ENCODE measurements at regions of chr11 and their contacts with region 1.

Region 1: DNA sequence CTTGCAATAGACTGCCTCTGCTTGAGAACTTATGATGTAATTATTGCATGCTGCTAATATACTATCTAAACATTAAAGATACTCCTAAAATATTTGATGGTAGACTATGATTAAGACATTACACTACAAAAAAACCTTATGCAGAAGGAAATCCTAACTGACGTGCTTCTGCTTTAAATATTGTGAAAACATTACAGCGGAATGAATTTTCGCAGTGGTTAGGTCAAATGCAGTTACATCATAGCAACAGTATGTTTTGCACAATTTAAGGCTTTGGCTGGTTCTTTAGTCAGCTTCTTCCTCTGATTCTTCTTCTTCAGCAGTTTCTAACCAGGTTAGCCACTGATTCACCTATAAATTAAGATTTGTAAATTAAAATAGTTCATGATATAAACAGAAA is 11.2 kb downstream of the EIF4G2 start:
- DNase-seq: no peak
- CTCF ChIP-seq: no peak

Region 2: DNA sequence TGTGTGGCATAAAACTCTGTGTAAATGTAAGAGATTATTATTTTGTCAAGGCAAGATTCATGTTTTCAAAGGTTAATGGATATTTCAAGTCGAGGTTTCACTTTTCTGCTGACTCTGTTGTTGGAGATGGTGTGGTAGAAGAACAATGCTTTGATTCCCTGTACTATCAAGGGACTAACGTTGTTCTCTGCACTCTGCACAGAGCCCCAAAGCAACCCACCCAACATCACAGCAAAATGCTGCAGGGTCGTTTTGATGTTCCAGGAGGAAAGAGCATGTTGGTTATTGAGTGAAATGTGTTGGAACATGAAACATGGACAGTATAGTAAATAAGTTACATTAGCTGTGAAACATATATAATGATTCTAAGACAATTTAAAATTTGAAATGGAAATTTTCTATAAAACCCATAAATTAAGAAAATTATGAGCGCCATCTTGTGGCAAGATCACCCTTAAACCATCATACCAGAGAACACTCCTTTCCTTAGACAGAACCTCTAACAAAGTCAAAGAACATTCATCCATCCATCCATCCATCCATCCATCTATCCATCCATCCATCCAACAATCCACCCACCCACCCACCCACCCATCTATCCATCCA is 224.7 kb after region 1 on chr11:
- in situ Hi-C with region 1: loop called (anchors 5 kb)
- DNase-seq: peak; percentile 37
- CTCF ChIP-seq: peak; percentile 51